ENCODE measurements at regions of chr17 and their contacts with region 1.

Region 1: GRCh38 chr17:63919311-63919723 is 678 bp upstream of the GH1 start:
- DNase-seq: peak; percentile 66 to 77
- H3K4me3 ChIP-seq: no peak overlapping the region
- H3K4me3 Mint-ChIP-seq: no peak overlapping the region
- H3K27ac Mint-ChIP-seq: no peak overlapping the region
- H3K4me1 ChIP-seq: no peaks in the 10 kb centered on the region
- H3K4me1 Mint-ChIP-seq: no peaks in the 10 kb centered on the region
- H3K27me3 ChIP-seq: no peaks in the 10 kb centered on the region
- H3K27me3 Mint-ChIP-seq: peaks cover 18% of the 10 kb centered on the region
- CTCF ChIP-seq: peak; percentile 92 to 94

Region 2: DNA sequence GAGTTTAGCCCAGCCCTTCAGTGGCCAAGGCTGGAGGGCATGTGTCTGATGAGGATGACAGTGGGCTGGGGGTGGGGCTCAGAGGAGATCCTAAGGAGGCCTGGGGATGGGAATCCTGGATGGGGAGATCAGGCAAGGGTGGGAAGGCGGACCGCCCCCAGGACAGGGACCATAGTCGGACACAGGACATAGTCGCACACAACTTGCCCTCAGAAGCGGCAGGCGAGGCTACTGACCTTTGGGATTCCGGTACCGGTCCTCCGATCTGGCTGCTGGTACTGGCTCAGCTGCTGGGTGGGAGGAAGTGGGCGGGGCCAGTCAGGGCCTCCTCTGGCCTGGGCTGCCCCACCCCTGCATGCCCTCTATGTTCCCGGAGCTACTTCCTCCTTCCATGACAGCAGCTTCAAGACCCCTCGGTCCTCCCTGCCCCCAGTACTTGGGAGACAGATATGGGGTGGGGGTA is 11.8 kb after region 1 on chr17:
- CTCF ChIA-PET with region 1: interaction called, 10 read pairs
- POLR2A ChIA-PET with region 1: no interaction called
- intact Hi-C with region 1: no loop called
- DNase-seq: no peak
- H3K4me3 ChIP-seq: no peak overlapping the region
- H3K4me3 Mint-ChIP-seq: no peak overlapping the region
- H3K27ac Mint-ChIP-seq: no peak overlapping the region
- H3K4me1 ChIP-seq: no peaks in the 10 kb centered on the region
- H3K4me1 Mint-ChIP-seq: no peaks in the 10 kb centered on the region
- H3K27me3 ChIP-seq: no peaks in the 10 kb centered on the region
- H3K27me3 Mint-ChIP-seq: peaks cover 1% of the 10 kb centered on the region
- CTCF ChIP-seq: no peak

Region 3: DNA sequence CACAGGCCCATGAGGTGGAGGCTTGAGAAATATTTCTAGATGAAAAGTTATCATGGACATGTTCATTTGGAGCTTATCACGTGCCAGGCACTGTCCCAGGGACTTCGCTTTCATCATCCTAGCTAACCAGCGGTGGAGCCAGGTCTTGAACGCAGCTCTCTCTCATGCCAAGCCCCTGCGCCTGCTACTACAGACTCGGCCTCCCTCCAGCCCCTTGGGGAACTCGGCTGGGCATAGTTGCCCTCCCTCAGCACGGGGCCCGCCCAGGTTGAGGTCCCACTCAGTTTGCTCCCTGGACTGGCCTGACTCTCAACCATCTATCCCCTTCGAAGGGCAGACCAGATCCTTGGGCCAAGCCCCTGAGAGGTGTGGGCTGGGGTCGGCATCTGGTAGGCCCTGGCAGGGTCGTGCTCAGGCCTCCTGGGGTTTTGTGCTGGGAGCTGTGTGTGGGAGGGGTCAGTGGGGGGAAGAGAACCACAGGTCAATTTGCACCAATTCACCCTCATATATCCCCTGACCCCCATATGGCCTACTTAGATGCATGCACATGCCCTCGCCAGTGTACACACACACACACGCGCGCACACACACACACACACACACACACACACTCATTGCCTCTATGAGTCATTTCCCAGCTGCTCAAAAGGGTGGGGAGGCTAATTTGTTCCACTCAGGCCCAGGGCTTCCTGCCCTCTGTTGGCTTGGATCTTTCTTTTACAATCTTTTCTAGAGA is 65.5 kb after region 1 on chr17:
- CTCF ChIA-PET with region 1: interaction called, 5 read pairs
- POLR2A ChIA-PET with region 1: no interaction called
- intact Hi-C with region 1: loop called (anchors 1 kb)
- DNase-seq: no peak
- H3K4me3 ChIP-seq: no peak overlapping the region
- H3K4me3 Mint-ChIP-seq: no peak overlapping the region
- H3K27ac Mint-ChIP-seq: no peak overlapping the region
- H3K4me1 ChIP-seq: peaks cover 9% of the 10 kb centered on the region; the same call in 1 of the 2 replicates
- H3K4me1 Mint-ChIP-seq: no peaks in the 10 kb centered on the region
- H3K27me3 ChIP-seq: no peaks in the 10 kb centered on the region
- H3K27me3 Mint-ChIP-seq: no peaks in the 10 kb centered on the region
- CTCF ChIP-seq: no peak

Region 4: DNA sequence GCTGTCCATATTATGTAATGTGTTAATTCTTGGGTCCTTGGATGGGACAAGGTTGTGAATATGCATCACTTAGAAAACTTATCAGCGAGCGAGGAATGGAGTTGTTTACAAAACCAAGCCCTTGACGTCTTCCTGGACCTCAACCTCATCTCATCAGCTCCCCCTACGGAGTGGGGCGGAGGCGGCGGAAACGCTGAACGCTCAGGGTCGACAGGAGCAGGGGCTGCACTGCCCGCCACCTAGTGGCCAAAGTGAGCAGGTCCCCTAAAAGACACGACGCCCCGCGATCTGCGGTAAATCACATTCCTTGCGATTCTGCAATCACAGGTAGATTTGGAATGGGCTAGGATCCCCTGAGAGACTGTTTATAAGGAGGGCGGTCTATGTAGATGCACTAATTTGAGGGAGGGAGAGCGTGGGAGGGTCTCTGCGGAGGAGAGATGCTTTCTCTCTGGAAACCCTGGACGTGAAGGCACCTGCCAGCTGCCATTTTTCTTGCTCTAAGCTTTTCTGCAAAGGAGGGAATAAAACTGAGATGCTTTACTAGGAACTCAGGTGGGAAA is 106.5 kb after region 1 on chr17:
- CTCF ChIA-PET with region 1: interaction called, 18 read pairs
- POLR2A ChIA-PET with region 1: no interaction called
- intact Hi-C with region 1: loop called (anchors 1 kb)
- DNase-seq: peak; percentile 86 to 87
- H3K4me3 ChIP-seq: peak overlapping the region; percentile 13; the same call in 1 of the 2 replicates
- H3K4me3 Mint-ChIP-seq: peak overlapping the region; percentile 71
- H3K27ac Mint-ChIP-seq: no peak overlapping the region
- H3K4me1 ChIP-seq: no peaks in the 10 kb centered on the region
- H3K4me1 Mint-ChIP-seq: peaks cover 16% of the 10 kb centered on the region
- H3K27me3 ChIP-seq: no peaks in the 10 kb centered on the region
- H3K27me3 Mint-ChIP-seq: no peaks in the 10 kb centered on the region
- CTCF ChIP-seq: peak; percentile 96 to 97